Psoas muscle (tissue), 8 donors: ENCODE measurements at regions of chr12 and their contacts with region 1.

Region 1: DNA sequence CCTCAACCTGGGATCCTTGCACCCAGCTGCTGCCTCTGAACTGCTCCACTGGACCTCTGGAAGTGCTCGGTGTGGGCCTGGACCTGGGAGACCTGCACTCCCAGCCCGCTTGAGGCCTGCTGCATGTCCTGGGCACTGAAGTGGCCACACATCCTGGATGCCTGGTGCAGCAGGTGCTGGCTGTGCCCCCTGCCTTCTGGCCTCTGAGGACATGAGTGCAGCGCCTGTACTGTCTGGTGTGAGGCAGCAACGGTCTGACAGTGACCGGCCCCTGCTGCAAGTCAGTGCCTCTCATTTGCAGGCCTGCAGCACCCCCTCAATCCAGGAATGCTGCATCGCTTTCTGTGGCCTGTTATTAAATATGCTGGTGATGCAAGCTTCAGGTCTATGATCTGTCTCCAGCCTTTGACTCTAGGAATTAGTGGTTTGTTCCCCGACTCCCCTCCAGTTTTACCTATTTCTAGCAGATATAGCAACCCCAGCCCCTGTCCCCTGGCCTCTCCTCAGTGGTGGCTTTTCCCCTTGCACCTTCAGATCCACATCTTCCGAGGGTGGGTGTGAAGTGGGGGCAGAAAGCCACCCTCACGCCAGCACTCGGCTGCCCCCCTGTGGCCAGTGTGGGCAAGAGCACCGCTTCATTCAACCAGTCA is 3.6 kb downstream of the SMIM41 start:
- DNase-seq: peak; percentile 69 to 85
- ATAC-seq: peak; percentile 57 to 70 (median 64)
- H3K4me3 ChIP-seq: no peak overlapping the region
- H3K27ac ChIP-seq: peak overlapping the region; percentile 26
- H3K4me1 ChIP-seq: peaks cover 49% of the 10 kb centered on the region
- H3K27me3 ChIP-seq: no peaks in the 10 kb centered on the region
- CTCF ChIP-seq: peak; percentile 97

Region 2: GRCh38 chr12:52004042-52004648 is 79.0 kb before region 1 on chr12:
- intact Hi-C with region 1: loop called in 1 of 2 experiments (anchors 5 kb)
- DNase-seq: peak; percentile 47 to 68
- ATAC-seq: peak; percentile 34 to 79 (median 60)
- H3K4me3 ChIP-seq: no peak overlapping the region
- H3K27ac ChIP-seq: no peak overlapping the region
- H3K4me1 ChIP-seq: peaks cover 4% of the 10 kb centered on the region
- H3K27me3 ChIP-seq: peaks cover 0 to 24% (median 8%) of the 10 kb centered on the region in 3 donors
- CTCF ChIP-seq: peak; percentile 74

Region 3: GRCh38 chr12:52023182-52023975 is 59.7 kb before region 1 on chr12:
- intact Hi-C with region 1: loop called (anchors 1 to 2 kb)
- DNase-seq: peak; percentile 88 to 92
- ATAC-seq: peak; percentile 55 to 65 (median 64)
- H3K4me3 ChIP-seq: peak overlapping the region; percentile 61
- H3K27ac ChIP-seq: peak overlapping the region; percentile 7
- H3K4me1 ChIP-seq: peaks cover 30% of the 10 kb centered on the region
- H3K27me3 ChIP-seq: no peaks in the 10 kb centered on the region
- CTCF ChIP-seq: peak; percentile 93

Region 4: DNA sequence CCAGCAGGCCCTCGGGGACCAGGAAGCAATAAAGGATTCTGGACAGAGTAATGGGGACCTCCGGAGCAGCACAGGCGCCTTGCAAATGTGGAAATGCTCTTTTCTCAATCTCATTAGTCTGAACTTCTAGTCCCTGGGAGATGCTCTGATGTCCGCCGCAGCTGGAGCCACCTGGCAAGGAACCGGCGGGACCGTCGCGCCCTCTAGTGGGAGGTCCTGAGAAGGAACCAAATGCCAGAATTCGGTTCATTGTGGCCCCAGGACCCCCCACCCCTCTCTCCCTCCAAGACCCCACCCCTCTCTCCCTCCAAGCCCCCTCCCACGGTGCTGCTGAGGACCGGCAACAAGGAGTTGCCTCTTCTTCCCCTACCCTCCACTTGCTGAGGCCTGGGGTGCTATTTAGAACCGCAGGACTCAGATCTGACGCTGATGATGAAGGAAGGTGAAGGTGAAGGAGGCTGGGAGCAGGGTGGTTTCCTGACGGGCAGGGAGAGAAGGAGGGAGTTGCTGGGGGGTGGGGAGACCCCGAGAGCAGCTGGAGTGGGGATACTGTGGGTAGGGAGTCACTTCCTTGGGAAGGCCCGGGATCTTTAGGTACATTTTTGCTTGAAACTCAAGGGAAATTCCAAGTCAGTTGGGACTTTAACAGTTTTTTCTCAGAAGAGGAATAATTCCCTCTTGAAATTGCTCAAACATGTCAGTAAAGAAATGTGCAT is 38.9 kb after region 1 on chr12:
- intact Hi-C with region 1: loop called in 1 of 2 experiments (anchors 2 kb)
- DNase-seq: peak; percentile 59 to 82
- ATAC-seq: peak; percentile 47 to 77 (median 70)
- H3K4me3 ChIP-seq: no peak overlapping the region
- H3K27ac ChIP-seq: no peak overlapping the region
- H3K4me1 ChIP-seq: no peaks in the 10 kb centered on the region
- H3K27me3 ChIP-seq: no peaks in the 10 kb centered on the region
- CTCF ChIP-seq: peak; percentile 71